ENCODE measurements at regions of chr5 and their contacts with region 1.

Region 1: GRCh38 chr5:15463231-15463980 is 36.6 kb upstream of the FBXL7 start:
- DNase-seq: no peak
- ATAC-seq: no peak

Region 2: GRCh38 chr5:15431923-15432322 is 31.5 kb before region 1 on chr5:
- intact Hi-C with region 1: no loop called
- DNase-seq: no peak
- ATAC-seq: no peak

Region 3: GRCh38 chr5:16245249-16245648 is 781.8 kb after region 1 on chr5:
- intact Hi-C with region 1: loop called in 1 of 2 experiments (anchors 10 kb)
- DNase-seq: no peak
- ATAC-seq: no peak